ENCODE measurements at regions of chr4 and their contacts with region 1.

Region 1: GRCh38 chr4:15001869-15002658 is at the start of gene CPEB2:
- DNase-seq: peak; percentile 88
- ATAC-seq: peak; percentile 65
- H3K4me3 ChIP-seq: peak within 1 kb of the TSS; percentile 96
- H3K27ac ChIP-seq: peak within 1 kb of the TSS; percentile 83
- H3K4me1 ChIP-seq: peaks cover 17% of the 10 kb centered on the region; the same call in 1 of the 2 replicates
- H3K27me3 ChIP-seq: no peaks in the 10 kb centered on the region
- CTCF ChIP-seq: no peak
- total RNA-seq, gene CPEB2: 1.8 and 2.4 TPM in 2 replicates

Region 2: GRCh38 chr4:13705521-13706041 is 1296.5 kb before region 1 on chr4:
- CTCF ChIA-PET with region 1: no interaction called
- POLR2A ChIA-PET with region 1: no interaction called
- intact Hi-C with region 1: loop called (anchors 2 kb)
- DNase-seq: peak; percentile 64
- ATAC-seq: peak; percentile 65
- H3K4me3 ChIP-seq: 0 out of 2 replicates have a peak overlapping the region, but pooled peaks have one; percentile 17
- H3K27ac ChIP-seq: peak overlapping the region; percentile 75
- H3K4me1 ChIP-seq: peaks cover 44% of the 10 kb centered on the region
- H3K27me3 ChIP-seq: no peaks in the 10 kb centered on the region
- CTCF ChIP-seq: no peak

Region 3: GRCh38 chr4:14841801-14842768 is 160.0 kb before region 1 on chr4:
- CTCF ChIA-PET with region 1: interaction called, 5 read pairs
- POLR2A ChIA-PET with region 1: no interaction called
- intact Hi-C with region 1: loop called (anchors 5 kb)
- DNase-seq: peak; percentile 72
- ATAC-seq: peak; percentile 97
- H3K4me3 ChIP-seq: no peak overlapping the region
- H3K27ac ChIP-seq: peak overlapping the region; percentile 71
- H3K4me1 ChIP-seq: peaks cover 17% of the 10 kb centered on the region
- H3K27me3 ChIP-seq: no peaks in the 10 kb centered on the region
- CTCF ChIP-seq: no peak

Region 4: DNA sequence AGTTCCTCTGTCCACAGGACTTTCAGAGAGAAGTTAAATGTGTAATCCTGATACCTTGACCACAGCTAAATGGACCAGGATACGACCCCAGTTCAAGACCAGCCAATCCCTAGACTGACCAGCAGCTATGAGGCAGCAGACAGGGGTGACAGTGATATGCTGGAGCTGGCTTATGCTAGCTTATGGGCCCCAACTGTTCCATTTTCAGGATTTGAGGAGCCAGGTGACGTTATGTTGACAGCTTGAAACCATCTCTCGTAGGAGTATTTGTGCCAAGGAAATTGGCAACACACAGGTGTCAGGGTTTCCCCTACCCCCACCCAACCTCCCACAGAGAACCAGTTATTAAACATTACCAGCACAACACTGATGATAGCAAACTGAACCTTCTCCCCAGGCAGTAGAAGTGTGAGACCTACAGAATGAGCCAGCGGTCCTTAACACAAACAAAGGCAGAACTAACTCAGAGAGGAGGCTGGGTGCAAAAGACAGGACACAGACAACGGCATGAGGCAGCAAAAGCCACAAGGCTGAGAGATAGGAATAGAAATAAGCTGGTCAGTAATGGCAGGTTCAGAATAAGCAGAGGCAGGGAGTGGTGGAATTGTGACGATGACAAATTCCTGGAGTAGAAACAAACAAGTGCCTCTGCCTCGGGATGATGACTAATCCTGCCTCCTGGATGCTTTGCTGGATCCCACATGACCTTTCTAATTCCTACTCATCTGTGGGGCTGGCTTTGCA is 85.3 kb before region 1 on chr4:
- CTCF ChIA-PET with region 1: no interaction called
- POLR2A ChIA-PET with region 1: no interaction called
- intact Hi-C with region 1: loop called (anchors 1 kb)
- DNase-seq: peak; percentile 84
- ATAC-seq: peak; percentile 94
- H3K4me3 ChIP-seq: no peak overlapping the region; the same call in 1 of the 2 replicates
- H3K27ac ChIP-seq: peak overlapping the region; percentile 79
- H3K4me1 ChIP-seq: peaks cover 16% of the 10 kb centered on the region
- H3K27me3 ChIP-seq: no peaks in the 10 kb centered on the region
- CTCF ChIP-seq: no peak

Region 5: DNA sequence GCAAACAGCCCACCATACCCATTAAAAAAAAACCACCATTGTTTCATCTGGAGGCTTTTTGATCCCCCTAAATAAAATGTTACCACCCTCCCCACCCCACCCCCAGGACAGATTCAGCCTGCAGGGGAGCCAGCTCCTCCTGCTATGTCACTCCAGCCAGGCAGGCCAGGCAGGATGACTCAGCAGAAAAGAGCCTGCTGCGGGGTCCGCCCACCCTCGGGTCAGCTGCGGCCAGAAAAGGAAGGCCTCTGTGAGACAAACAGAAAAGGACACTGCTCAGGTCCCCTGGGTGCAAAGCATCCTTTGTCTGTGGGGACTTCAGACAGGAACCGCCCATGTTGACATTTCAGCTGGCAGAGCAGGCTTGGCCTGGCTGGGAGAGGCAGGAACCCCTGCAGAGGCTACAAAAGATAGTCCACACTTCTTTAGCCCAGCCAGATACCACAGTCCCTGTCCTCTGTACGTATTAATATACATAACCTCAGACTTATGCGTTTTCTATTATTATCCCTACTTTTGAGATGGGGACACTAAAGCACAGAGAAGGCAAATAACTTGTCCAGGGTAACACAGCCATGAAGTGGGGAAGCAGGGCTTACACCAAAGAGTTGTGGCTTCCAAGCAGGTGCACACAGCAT is 147.9 kb after region 1 on chr4:
- CTCF ChIA-PET with region 1: no interaction called
- POLR2A ChIA-PET with region 1: no interaction called
- intact Hi-C with region 1: no loop called
- DNase-seq: peak; percentile 72
- ATAC-seq: peak; percentile 90
- H3K4me3 ChIP-seq: no peak overlapping the region
- H3K27ac ChIP-seq: peak overlapping the region; percentile 67
- H3K4me1 ChIP-seq: peaks cover 22% of the 10 kb centered on the region
- H3K27me3 ChIP-seq: no peaks in the 10 kb centered on the region
- CTCF ChIP-seq: no peak

Region 6: DNA sequence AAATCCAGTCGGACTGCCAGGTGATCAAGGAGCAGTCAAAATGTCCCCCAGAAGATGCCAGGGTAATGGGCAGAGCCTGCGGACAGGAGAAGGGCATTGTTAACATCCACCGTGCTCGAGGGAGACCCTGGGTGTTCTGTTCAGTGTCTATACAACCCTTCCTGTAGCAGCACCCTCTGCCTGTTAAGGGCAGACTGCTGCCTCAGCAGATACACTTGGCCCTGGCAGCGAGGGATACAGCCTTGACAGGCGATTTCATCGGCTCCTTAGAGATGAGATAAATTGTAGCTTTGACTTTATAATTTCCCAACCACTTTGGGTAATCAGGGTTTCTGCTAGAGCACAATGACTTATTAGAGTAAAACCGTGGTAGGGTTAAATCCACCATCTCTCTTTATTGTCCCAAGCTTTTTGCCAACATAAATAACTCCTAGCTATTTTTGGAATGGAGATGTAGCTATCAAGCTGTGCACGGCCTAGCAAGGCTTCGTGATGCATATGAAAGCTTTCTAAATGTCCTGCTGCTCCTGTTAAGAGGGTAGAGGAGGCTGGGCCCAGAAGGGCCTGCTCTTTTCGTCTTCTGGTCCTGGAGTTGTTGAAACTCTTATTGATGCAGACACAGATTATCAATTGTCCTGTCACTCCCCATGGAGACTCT is 196.1 kb after region 1 on chr4:
- CTCF ChIA-PET with region 1: no interaction called
- POLR2A ChIA-PET with region 1: interaction called, 10 read pairs
- intact Hi-C with region 1: no loop called
- DNase-seq: no peak
- ATAC-seq: no peak
- H3K4me3 ChIP-seq: no peak overlapping the region
- H3K27ac ChIP-seq: no peak overlapping the region
- H3K4me1 ChIP-seq: no peaks in the 10 kb centered on the region
- H3K27me3 ChIP-seq: no peaks in the 10 kb centered on the region
- CTCF ChIP-seq: no peak

Measured in PC-3 (cell line).